CD4-positive, alpha-beta memory T cell (primary cell): ENCODE measurements at regions of chr9 and their contacts with region 1.

Region 1: GRCh38 chr9:127568971-127569885 is 42.8 kb upstream of the STXBP1 start:
- DNase-seq: peak; percentile 72 to 78 (median 75)
- H3K4me3 ChIP-seq: peak overlapping the region; percentile 29 to 62
- H3K4me3 Mint-ChIP-seq: peak overlapping the region; percentile 79 to 94 (median 89)
- H3K27ac ChIP-seq: peak overlapping the region; percentile 56
- H3K27ac Mint-ChIP-seq: peak overlapping the region; percentile 82 to 97 (median 94)
- H3K4me1 ChIP-seq: peaks cover 36% of the 10 kb centered on the region
- H3K4me1 Mint-ChIP-seq: peaks cover 17 to 27% (median 21%) of the 10 kb centered on the region in 4 donors
- H3K27me3 ChIP-seq: no peaks in the 10 kb centered on the region
- H3K27me3 Mint-ChIP-seq: no peaks in the 10 kb centered on the region

Region 2: GRCh38 chr9:127555768-127556397 is 13.3 kb before region 1 on chr9:
- CTCF ChIA-PET with region 1: interaction called, 7 read pairs
- POLR2A ChIA-PET with region 1: interaction called, 28 read pairs
- intact Hi-C with region 1: no loop called
- DNase-seq: peak; percentile 34 to 74 (median 45)
- H3K4me3 ChIP-seq: peak overlapping the region in 1 of 2 donors; percentile 2
- H3K4me3 Mint-ChIP-seq: peak overlapping the region in 7 of 8 donors; percentile 59 to 83 (median 80)
- H3K27ac ChIP-seq: peak overlapping the region; percentile 0
- H3K27ac Mint-ChIP-seq: peak overlapping the region; percentile 74 to 89 (median 83)
- H3K4me1 ChIP-seq: peaks cover 55% of the 10 kb centered on the region
- H3K4me1 Mint-ChIP-seq: peaks cover 31 to 67% (median 52%) of the 10 kb centered on the region in 4 donors
- H3K27me3 ChIP-seq: no peaks in the 10 kb centered on the region
- H3K27me3 Mint-ChIP-seq: no peaks in the 10 kb centered on the region